ENCODE measurements at regions of chr2 and their contacts with region 1.

Region 1: GRCh38 chr2:72973566-72974435 is 56.5 kb downstream of the EMX1 start:
- DNase-seq: no peak
- H3K4me3 ChIP-seq: no peak overlapping the region
- H3K27ac ChIP-seq: no peak overlapping the region
- H3K4me1 ChIP-seq: no peaks in the 10 kb centered on the region
- H3K27me3 ChIP-seq: no peaks in the 10 kb centered on the region
- CTCF ChIP-seq: peak in 3 of 4 experiments; percentile 30 to 70 (median 55)
- EP300 ChIP-seq: no peak
- POLR2A ChIP-seq: no peak

Region 2: GRCh38 chr2:72887754-72888437 is 85.9 kb before region 1 on chr2:
- intact Hi-C with region 1: loop called (anchors 5 kb)
- DNase-seq: peak; percentile 95
- H3K4me3 ChIP-seq: peak overlapping the region; percentile 44 to 92 (median 72)
- H3K27ac ChIP-seq: peak overlapping the region; percentile 84 to 91 (median 90)
- H3K4me1 ChIP-seq: peaks cover 0 to 33% (median 28%) of the 10 kb centered on the region in 4 donors
- H3K27me3 ChIP-seq: no peaks in the 10 kb centered on the region
- CTCF ChIP-seq: peak; percentile 56 to 92 (median 82)
- EP300 ChIP-seq: no peak
- POLR2A ChIP-seq: no peak